ENCODE measurements at regions of chr16 and their contacts with region 1.

Region 1: GRCh38 chr16:3150346-3151218 is 15.8 kb downstream of the ZNF213 start:
- DNase-seq: peak; percentile 95

Region 2: DNA sequence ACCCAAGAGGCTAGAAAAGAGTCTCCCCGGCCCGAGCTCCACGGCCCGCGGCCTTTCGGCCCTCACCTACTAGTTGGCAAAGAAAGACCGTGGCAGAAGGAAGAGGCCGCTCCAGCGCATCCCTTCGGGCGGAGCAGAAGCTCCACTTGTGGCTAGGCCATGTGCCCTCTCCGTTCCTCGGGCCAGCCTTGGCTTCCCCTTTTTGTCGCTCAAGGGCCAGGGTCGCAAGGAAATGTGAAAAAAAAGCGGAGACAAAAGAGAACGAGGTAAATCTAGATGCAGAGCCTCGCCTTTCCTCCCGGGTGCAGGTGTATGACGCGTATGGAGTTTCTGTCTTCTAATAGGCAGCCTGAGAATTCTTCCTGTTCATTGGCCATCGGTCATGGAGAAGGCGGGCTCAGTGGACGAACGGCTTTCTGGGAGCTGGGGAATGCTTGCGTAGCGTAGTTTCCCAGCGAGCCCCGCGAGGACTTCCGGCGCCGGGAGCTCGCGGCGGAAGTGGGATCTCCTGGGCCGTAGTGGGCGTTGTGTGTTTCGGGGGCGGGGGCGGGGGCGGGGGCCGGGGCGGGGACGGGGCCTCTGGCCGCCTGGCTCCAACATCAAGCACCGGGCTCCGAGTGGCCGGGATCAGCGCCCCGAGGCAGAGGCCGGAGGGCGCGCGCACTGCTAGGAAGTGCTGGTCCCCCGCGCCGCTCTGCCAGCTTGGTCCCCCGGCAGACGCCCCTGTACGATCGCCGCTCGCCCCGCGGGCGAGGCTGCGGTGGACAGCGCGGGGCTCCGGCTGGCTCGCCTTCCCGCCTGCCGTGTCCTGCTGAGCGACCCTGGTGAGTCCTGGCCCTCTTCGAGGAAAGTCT is 15.8 kb before region 1 on chr16 and contains the start of gene ZNF213:
- CTCF ChIA-PET with region 1: interaction called, 20 read pairs
- POLR2A ChIA-PET with region 1: interaction called, 78 read pairs
- DNase-seq: peak; percentile 90

Region 3: GRCh38 chr16:3214904-3215600 is 64.5 kb after region 1 on chr16:
- CTCF ChIA-PET with region 1: no interaction called
- POLR2A ChIA-PET with region 1: no interaction called
- DNase-seq: no peak

Region 4: DNA sequence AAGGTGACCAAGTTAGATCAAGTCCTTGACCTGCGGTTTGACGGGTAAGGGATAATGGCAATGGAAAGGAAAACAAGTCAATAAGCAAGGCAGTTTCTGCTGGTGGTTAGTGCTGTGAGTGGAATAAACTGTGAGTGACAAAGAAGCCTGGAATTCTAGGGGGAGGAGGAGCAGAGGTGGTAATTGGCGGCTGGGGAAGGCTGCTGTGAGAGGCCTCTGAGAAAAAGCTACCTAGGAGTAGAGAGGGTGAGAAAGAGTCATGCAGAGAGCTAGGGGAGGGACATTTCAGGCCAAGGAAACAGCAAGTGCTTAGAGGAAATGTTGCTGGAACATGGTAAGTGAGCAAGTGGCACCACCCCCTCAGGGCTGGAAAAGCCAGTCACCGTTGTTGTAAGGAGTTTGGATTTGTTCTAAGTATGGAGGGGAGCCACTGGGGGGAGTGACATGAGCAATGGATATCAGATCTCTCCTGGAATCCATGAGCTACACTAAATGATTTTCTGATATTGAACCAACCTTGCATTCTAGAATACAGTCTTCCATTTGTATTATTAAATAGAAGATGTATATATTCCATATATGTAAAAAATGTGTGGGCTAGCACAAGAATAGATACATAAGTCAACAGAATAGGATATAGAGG is 420.0 kb after region 1 on chr16:
- CTCF ChIA-PET with region 1: no interaction called
- POLR2A ChIA-PET with region 1: no interaction called
- DNase-seq: no peak

Measured in HEK293T (cell line).